Activated CD4-positive, alpha-beta T cell treated with anti-CD3 and anti-CD28 coated beads, Interleukin-2, amount 10 ng/mL, durations not matched to agents 24 days and 14 days (primary cell): ENCODE measurements at regions of chrX and their contacts with region 1.

Region 1: GRCh38 chrX:132219343-132219768 is at the start of gene RAP2C:
- DNase-seq: peak; percentile 85
- H3K4me3 Mint-ChIP-seq: peak within 1 kb of the TSS; percentile 86
- H3K27ac Mint-ChIP-seq: peak within 1 kb of the TSS; percentile 89
- H3K4me1 Mint-ChIP-seq: peaks cover 14% of the 10 kb centered on the region
- H3K27me3 Mint-ChIP-seq: no peaks in the 10 kb centered on the region
- total RNA-seq, gene RAP2C: 31.3 and 34.5 TPM in 2 replicates

Region 2: DNA sequence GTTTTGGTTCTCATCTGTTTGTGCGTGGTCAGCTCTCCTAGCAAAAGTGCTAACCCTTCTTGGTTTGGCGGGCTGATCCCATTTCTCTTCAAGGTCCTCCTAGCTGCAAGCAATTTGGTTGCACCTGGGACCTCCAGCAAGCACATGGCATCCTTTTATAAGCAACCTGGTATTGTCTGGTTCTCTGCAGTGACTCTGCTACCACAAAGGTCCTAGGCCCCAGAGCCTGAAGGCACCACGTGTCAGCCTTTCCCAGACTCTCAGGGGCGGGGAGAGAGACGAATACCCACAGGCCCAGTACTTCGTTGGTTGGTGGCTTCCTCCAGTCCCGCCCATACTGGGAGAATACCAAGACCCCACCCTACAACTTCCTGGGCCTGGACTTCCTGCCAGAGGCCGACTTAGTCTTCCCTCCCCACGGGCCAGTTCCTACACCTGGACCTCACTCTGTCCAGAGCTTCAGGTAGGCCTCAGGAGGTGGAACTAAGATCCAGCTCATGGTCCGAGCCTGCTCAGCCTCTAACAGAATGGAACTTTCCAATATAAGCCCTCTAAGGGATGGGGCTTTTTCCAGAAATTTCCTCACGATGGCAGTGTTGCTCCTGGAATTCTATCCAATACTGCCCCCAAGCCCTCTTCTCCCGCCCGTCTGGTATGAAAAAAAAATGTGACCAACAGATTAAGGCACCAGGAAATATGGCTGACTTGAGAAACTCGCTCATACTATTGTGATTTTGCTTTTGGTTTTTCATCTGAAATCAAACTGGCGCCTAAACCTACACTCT is 388.8 kb before region 1 on chrX:
- intact Hi-C with region 1: loop called (anchors 1 kb)
- DNase-seq: peak; percentile 88
- H3K4me3 Mint-ChIP-seq: peak overlapping the region; percentile 94
- H3K27ac Mint-ChIP-seq: peak overlapping the region; percentile 94
- H3K4me1 Mint-ChIP-seq: peaks cover 27% of the 10 kb centered on the region
- H3K27me3 Mint-ChIP-seq: no peaks in the 10 kb centered on the region

Region 3: GRCh38 chrX:132022967-132023895 is 196.1 kb before region 1 on chrX and contains the start of gene STK26:
- intact Hi-C with region 1: loop called (anchors 1 kb)
- DNase-seq: peak; percentile 94
- H3K4me3 Mint-ChIP-seq: peak within 1 kb of the TSS; percentile 95
- H3K27ac Mint-ChIP-seq: peak within 1 kb of the TSS; percentile 95
- H3K4me1 Mint-ChIP-seq: peaks cover 15% of the 10 kb centered on the region
- H3K27me3 Mint-ChIP-seq: no peaks in the 10 kb centered on the region
- total RNA-seq, gene STK26: 66.0 and 72.5 TPM in 2 replicates

Region 4: DNA sequence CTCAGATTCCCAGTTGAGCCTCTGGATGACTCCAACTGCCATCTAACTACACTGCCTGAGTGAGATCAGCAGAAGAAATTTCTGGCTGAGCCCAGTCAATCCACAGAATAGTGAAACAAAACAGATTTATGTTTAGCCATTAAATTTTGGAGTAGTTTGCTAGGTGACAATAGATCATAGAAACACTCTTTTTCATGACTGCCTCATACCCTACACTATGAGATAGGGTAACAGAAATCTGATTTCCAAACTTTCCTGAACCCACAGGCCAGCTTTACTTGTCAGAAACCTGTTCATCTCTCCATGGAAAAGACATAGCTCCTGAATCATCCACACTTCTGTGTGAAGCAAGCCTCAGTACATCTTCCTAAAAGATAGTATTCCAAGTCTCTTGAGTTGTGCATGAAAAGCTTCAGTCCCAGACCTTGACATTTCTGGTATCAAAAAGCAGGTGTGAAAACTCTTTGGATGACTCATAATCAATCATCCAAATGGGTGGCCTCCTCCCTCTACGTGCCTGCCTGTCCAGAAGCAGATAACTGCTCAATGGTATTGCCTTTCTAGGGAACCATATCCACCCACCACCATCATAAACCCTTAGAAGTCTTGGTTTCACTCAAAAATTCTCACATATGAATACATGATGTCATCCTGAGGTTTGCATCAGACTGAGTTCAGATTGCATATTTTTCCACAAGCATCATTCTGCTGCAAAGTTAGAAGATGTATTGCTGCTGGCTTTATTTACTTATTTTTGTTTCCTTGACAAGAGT is 47.4 kb after region 1 on chrX:
- intact Hi-C with region 1: loop called (anchors 5 kb)
- DNase-seq: no peak
- H3K4me3 Mint-ChIP-seq: no peak overlapping the region
- H3K27ac Mint-ChIP-seq: peak overlapping the region; percentile 70
- H3K4me1 Mint-ChIP-seq: peaks cover 9% of the 10 kb centered on the region
- H3K27me3 Mint-ChIP-seq: no peaks in the 10 kb centered on the region

Region 5: GRCh38 chrX:132622130-132622529 is 402.8 kb after region 1 on chrX:
- intact Hi-C with region 1: loop called (anchors 5 kb)
- DNase-seq: peak; percentile 62
- H3K4me3 Mint-ChIP-seq: no peak overlapping the region
- H3K27ac Mint-ChIP-seq: peak overlapping the region; percentile 66
- H3K4me1 Mint-ChIP-seq: peaks cover 5% of the 10 kb centered on the region
- H3K27me3 Mint-ChIP-seq: no peaks in the 10 kb centered on the region